MCF 10A (cell line): ENCODE measurements at regions of chr14 and their contacts with region 1.

Region 1: DNA sequence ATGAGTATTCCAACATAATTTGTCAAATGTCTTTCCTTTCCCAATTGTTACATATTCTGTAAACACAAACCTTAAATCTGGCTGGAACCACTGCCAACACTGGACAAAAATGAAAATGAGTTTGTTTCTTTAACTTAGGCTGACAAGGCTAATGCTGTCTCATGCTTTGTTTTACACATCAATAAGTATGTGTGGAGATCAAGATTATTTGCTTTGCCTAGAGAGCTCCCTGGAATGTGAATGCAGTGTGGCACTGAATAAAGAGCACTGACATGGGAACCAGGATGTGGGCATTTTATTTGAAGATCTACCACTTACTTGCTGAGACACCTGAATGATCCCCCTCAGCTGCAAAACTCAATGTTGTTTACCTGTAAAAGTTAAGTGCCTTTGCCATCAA is 61.7 kb downstream of the RALGAPA1 start:
- DNase-seq: no peak
- H3K4me3 Mint-ChIP-seq: no peak overlapping the region
- H3K27ac Mint-ChIP-seq: no peak overlapping the region
- H3K4me1 Mint-ChIP-seq: no peaks in the 10 kb centered on the region
- H3K27me3 Mint-ChIP-seq: no peaks in the 10 kb centered on the region
- CTCF ChIP-seq: no peak

Region 2: GRCh38 chr14:34931206-34931605 is 816.2 kb before region 1 on chr14:
- CTCF ChIA-PET with region 1: no interaction called
- POLR2A ChIA-PET with region 1: no interaction called
- intact Hi-C with region 1: no loop called
- DNase-seq: no peak
- H3K4me3 Mint-ChIP-seq: no peak overlapping the region
- H3K27ac Mint-ChIP-seq: no peak overlapping the region
- H3K4me1 Mint-ChIP-seq: peaks cover 5% of the 10 kb centered on the region
- H3K27me3 Mint-ChIP-seq: no peaks in the 10 kb centered on the region
- CTCF ChIP-seq: no peak

Region 3: DNA sequence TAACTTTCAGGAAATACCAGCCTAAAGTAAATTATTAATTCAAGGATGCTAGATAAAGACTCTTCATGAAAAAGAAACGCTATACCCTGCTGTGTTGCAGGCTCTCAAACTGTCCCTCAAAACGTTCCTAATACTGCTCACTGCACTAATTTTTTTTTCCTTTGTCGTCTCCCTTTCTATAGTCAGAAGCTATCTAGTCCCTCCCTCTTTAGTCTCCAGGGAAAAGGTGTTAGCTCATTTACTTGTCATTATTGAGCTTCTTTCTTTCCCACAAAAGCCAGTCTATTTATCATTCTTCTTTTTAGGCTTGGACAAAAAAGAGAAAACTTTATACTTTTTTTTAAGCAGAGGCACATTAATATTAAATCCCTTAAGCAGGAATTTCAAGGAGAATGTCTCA is 243.7 kb before region 1 on chr14:
- CTCF ChIA-PET with region 1: no interaction called
- POLR2A ChIA-PET with region 1: no interaction called
- intact Hi-C with region 1: no loop called
- DNase-seq: no peak
- H3K4me3 Mint-ChIP-seq: no peak overlapping the region
- H3K27ac Mint-ChIP-seq: no peak overlapping the region
- H3K4me1 Mint-ChIP-seq: no peaks in the 10 kb centered on the region
- H3K27me3 Mint-ChIP-seq: peaks cover 49% of the 10 kb centered on the region
- CTCF ChIP-seq: no peak

Region 4: GRCh38 chr14:35661875-35662274 is 85.5 kb before region 1 on chr14:
- CTCF ChIA-PET with region 1: no interaction called
- POLR2A ChIA-PET with region 1: no interaction called
- intact Hi-C with region 1: no loop called
- DNase-seq: no peak
- H3K4me3 Mint-ChIP-seq: no peak overlapping the region
- H3K27ac Mint-ChIP-seq: no peak overlapping the region
- H3K4me1 Mint-ChIP-seq: no peaks in the 10 kb centered on the region
- H3K27me3 Mint-ChIP-seq: no peaks in the 10 kb centered on the region
- CTCF ChIP-seq: no peak

Region 5: DNA sequence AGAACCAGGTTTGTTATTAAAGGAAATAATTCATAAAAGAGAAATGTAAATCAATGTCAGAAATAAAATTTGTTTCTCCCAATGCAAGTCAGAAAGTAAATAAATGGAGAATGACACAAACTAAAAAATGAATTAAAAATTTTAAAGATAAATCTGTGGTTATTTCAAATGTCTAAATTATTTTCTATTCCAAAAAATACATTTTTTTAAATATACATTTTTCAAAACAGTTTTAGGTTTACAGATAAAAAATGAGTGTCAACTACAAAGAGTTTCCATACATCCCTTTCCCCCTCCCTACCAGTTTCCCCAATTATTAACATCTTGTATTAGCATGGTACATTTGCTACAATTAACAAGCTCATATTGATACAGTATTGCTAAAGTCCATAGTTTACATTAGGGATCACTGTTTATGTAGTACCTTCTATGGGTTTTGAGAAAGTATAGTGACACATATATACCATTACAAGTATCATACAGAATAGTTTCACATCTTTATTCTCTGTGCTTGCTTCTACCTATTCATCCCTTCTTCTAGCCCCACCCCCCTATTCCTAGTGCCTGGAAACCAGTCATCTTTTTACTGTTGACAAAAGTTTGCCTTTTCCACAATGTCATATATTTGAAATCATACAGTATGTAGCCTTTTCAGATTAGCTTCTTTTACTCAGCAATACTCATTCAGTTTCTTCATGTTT is 42.4 kb before region 1 on chr14:
- CTCF ChIA-PET with region 1: no interaction called
- POLR2A ChIA-PET with region 1: no interaction called
- intact Hi-C with region 1: no loop called
- DNase-seq: no peak
- H3K4me3 Mint-ChIP-seq: no peak overlapping the region
- H3K27ac Mint-ChIP-seq: no peak overlapping the region
- H3K4me1 Mint-ChIP-seq: peaks cover 7% of the 10 kb centered on the region
- H3K27me3 Mint-ChIP-seq: no peaks in the 10 kb centered on the region
- CTCF ChIP-seq: no peak

Region 6: GRCh38 chr14:35814371-35815005 is 67.1 kb after region 1 on chr14:
- CTCF ChIA-PET with region 1: interaction called, 10 read pairs
- POLR2A ChIA-PET with region 1: no interaction called
- intact Hi-C with region 1: no loop called
- DNase-seq: peak; percentile 82
- H3K4me3 Mint-ChIP-seq: no peak overlapping the region
- H3K27ac Mint-ChIP-seq: no peak overlapping the region
- H3K4me1 Mint-ChIP-seq: peaks cover under 1% of the 10 kb centered on the region
- H3K27me3 Mint-ChIP-seq: no peaks in the 10 kb centered on the region
- CTCF ChIP-seq: peak; percentile 77